ENCODE measurements at regions of chr1 and their contacts with region 1.

Region 1: DNA sequence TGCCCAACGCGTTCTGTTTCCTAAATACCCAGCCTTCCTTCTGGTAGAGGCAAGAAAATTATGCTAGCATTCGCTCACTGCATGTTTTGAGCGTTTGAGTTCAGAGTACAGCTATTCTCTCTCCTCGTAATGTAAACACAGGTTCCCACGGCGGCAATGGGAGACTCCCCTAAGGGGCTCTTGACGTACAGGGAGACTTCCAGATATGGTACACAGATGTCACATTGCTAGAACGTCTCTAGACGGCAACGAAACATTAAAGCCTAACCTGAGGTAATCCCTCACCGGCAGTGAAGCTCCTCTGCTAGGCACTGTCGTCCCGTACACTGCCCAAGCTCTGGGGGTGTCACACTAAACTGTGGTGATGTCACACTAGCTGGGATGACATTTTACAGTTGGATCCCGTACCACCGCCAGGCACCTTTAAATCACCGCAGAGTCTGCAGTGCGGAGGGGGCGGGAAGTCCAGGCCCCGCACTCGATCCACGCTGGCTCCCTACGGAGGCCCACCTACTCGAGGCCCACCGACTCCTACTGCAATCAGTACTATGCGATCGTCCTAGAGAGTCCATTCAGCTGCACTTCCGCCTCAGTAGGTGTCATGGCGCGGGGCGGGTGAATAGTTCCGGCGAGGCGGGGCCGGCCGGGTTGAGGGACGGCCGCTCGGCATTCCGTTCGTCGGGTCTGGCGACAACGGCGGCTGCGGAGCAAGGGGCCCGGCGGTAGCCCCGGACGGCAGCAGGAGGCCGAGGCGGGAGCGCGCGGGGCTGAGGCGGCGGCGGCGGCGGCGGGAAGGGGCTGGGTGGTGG is at the start of gene HIPK1:
- DNase-seq: peak; percentile 93
- ATAC-seq: peak; percentile 73
- H3K4me3 Mint-ChIP-seq: peak within 1 kb of the TSS; percentile 99
- H3K27ac Mint-ChIP-seq: peak within 1 kb of the TSS; percentile 99
- H3K4me1 Mint-ChIP-seq: peaks cover 50% of the 10 kb centered on the region
- H3K27me3 Mint-ChIP-seq: no peaks in the 10 kb centered on the region
- CTCF ChIP-seq: no peak
- total RNA-seq, gene HIPK1: 38.0 and 39.0 TPM in 2 replicates

Region 2: GRCh38 chr1:113835642-113836307 is 93.4 kb before region 1 on chr1:
- CTCF ChIA-PET with region 1: interaction called, 40 read pairs
- POLR2A ChIA-PET with region 1: interaction called, 8 read pairs
- intact Hi-C with region 1: loop called (anchors 1 kb)
- DNase-seq: no peak
- ATAC-seq: no peak
- H3K4me3 Mint-ChIP-seq: no peak overlapping the region
- H3K27ac Mint-ChIP-seq: no peak overlapping the region
- H3K4me1 Mint-ChIP-seq: peaks cover 2% of the 10 kb centered on the region
- H3K27me3 Mint-ChIP-seq: no peaks in the 10 kb centered on the region
- CTCF ChIP-seq: peak; percentile 20

Region 3: DNA sequence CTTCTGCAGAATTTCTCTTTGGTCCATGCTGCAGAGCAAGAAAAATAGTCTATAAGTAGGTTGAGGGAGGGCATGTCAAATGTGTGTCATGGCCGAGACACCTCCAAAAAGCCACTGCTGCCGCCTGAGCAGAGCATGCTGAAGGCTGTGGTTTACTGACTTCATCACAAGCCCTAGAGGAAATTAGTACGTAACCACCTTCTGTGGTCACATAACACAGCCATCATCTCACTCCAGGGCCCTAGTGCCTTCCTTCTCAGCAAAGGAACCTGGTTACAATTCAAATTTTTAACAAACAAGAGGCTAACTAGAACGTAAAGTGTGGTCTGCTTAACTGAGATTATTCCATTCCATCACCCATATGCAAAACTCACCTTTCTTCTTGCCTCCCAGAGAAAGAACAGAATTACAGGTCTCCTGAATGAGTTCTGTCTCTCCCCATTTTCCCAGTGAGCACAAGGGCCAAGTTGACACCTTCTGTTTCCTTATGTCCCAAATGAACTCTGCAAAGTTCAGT is 57.5 kb before region 1 on chr1 and contains the start of gene PTPN22:
- CTCF ChIA-PET with region 1: interaction called, 3 read pairs
- POLR2A ChIA-PET with region 1: interaction called, 4 read pairs
- intact Hi-C with region 1: loop called (anchors 1 kb)
- DNase-seq: peak; percentile 39
- ATAC-seq: peak; percentile 96
- H3K4me3 Mint-ChIP-seq: peak within 1 kb of the TSS; percentile 85
- H3K27ac Mint-ChIP-seq: peak within 1 kb of the TSS; percentile 95
- H3K4me1 Mint-ChIP-seq: peaks cover 77% of the 10 kb centered on the region
- H3K27me3 Mint-ChIP-seq: no peaks in the 10 kb centered on the region
- CTCF ChIP-seq: no peak
- total RNA-seq, gene PTPN22: 25.5 and 26.1 TPM in 2 replicates

Region 4: GRCh38 chr1:113949007-113949406 is 19.9 kb after region 1 on chr1:
- CTCF ChIA-PET with region 1: interaction called, 8 read pairs
- POLR2A ChIA-PET with region 1: interaction called, 6 read pairs
- intact Hi-C with region 1: loop called (anchors 2 kb)
- DNase-seq: no peak
- ATAC-seq: no peak
- H3K4me3 Mint-ChIP-seq: no peak overlapping the region
- H3K27ac Mint-ChIP-seq: no peak overlapping the region
- H3K4me1 Mint-ChIP-seq: peaks cover 30% of the 10 kb centered on the region
- H3K27me3 Mint-ChIP-seq: no peaks in the 10 kb centered on the region
- CTCF ChIP-seq: no peak

Region 5: GRCh38 chr1:114130846-114131525 is 201.8 kb after region 1 on chr1:
- CTCF ChIA-PET with region 1: no interaction called
- POLR2A ChIA-PET with region 1: no interaction called
- intact Hi-C with region 1: no loop called
- DNase-seq: no peak
- ATAC-seq: no peak
- H3K4me3 Mint-ChIP-seq: no peak overlapping the region
- H3K27ac Mint-ChIP-seq: no peak overlapping the region
- H3K4me1 Mint-ChIP-seq: no peaks in the 10 kb centered on the region
- H3K27me3 Mint-ChIP-seq: peaks cover 8% of the 10 kb centered on the region
- CTCF ChIP-seq: no peak